CD4-positive, alpha-beta T cell (primary cell): ENCODE measurements at regions of chr3 and their contacts with region 1.

Region 1: GRCh38 chr3:170180908-170181879 is at the start of gene PHC3:
- DNase-seq: peak; percentile 85 to 96 (median 90)
- ATAC-seq: peak; percentile 64
- H3K4me3 ChIP-seq: peak within 1 kb of the TSS; percentile 96
- H3K4me3 Mint-ChIP-seq: peak within 1 kb of the TSS; percentile 100
- H3K27ac ChIP-seq: peak within 1 kb of the TSS; percentile 97 to 99
- H3K27ac Mint-ChIP-seq: peak within 1 kb of the TSS; percentile 100
- H3K4me1 ChIP-seq: peaks cover 36% of the 10 kb centered on the region
- H3K4me1 Mint-ChIP-seq: peaks cover 40% of the 10 kb centered on the region
- H3K27me3 ChIP-seq: no peaks in the 10 kb centered on the region
- H3K27me3 Mint-ChIP-seq: no peaks in the 10 kb centered on the region
- CTCF ChIP-seq: no peak
- total RNA-seq, gene PHC3: 143 to 150 TPM

Region 2: DNA sequence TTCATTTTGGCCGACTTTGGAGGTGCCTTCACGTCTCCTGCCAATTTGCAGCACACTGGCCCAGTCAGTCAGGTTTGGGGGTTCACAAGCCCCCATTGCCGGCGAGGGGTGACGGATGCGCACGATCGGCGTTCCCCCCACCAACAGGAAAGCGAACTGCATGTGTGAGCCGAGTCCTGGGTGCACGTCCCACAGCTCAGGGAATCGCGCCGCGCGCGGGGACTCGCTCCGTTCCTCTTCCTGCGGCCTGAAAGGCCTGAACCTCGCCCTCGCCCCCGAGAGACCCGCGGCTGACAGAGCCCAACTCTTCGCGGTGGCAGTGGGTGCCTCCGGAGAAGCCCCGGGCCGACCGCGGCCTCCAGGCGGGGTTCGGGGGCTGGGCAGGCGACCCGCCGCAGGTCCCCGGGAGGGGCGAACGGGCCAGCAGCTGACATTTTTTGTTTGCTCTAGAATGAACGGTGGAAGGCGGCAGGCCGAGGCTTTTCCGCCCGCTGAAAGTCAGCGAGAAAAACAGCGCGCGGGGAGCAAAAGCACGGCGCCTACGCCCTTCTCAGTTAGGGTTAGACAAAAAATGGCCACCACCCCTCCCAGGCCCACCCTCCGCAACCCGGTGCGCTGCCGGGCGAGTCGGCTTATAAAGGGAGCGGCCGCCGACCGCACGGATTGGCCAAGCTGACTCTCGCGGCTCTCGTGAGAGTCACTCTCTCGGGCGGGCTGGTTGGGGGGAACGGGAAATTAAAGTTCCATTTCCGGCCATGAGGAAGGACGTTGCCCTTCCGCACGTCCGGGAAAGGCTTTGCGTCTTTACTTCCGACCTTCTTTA is 416.5 kb before region 1 on chr3 and contains the start of gene TERC:
- CTCF ChIA-PET with region 1: no interaction called
- POLR2A ChIA-PET with region 1: interaction called, 16 read pairs
- intact Hi-C with region 1: loop called in 1 of 2 experiments (anchors 5 kb)
- DNase-seq: peak; percentile 82 to 98 (median 92)
- ATAC-seq: peak; percentile 82
- H3K4me3 ChIP-seq: peak within 1 kb of the TSS; percentile 93
- H3K4me3 Mint-ChIP-seq: peak within 1 kb of the TSS; percentile 98
- H3K27ac ChIP-seq: peak within 1 kb of the TSS; percentile 95 to 96
- H3K27ac Mint-ChIP-seq: peak within 1 kb of the TSS; percentile 97
- H3K4me1 ChIP-seq: peaks cover 27% of the 10 kb centered on the region
- H3K4me1 Mint-ChIP-seq: peaks cover 38% of the 10 kb centered on the region
- H3K27me3 ChIP-seq: no peaks in the 10 kb centered on the region
- H3K27me3 Mint-ChIP-seq: no peaks in the 10 kb centered on the region
- CTCF ChIP-seq: no peak
- total RNA-seq, gene TERC: 9.0 to 10.4 TPM

Region 3: DNA sequence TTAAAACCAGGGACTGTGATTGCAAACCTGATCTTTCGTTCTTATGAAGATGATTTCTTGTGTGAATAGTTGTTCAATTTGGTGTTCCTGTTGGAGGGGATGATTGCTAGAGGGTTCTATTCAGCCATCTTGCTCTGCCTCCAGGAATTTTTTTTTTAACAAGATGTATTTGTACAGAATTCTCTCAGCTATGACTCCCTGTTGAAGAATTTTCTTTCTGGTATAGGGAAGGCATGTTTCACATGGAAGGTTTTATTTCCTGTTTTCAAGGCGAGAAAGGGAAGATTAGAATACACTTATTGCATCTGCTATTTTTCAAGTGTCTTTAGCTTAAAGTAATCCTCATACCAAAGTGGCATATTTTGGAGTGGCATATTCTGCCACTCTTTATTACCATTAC is 362.9 kb before region 1 on chr3:
- CTCF ChIA-PET with region 1: no interaction called
- POLR2A ChIA-PET with region 1: no interaction called
- intact Hi-C with region 1: no loop called
- DNase-seq: no peak
- ATAC-seq: no peak
- H3K4me3 ChIP-seq: no peak overlapping the region
- H3K4me3 Mint-ChIP-seq: no peak overlapping the region
- H3K27ac ChIP-seq: no peak overlapping the region
- H3K27ac Mint-ChIP-seq: no peak overlapping the region
- H3K4me1 ChIP-seq: peaks cover 11% of the 10 kb centered on the region
- H3K4me1 Mint-ChIP-seq: peaks cover 12% of the 10 kb centered on the region
- H3K27me3 ChIP-seq: peaks cover 4% of the 10 kb centered on the region in 2 experiments
- H3K27me3 Mint-ChIP-seq: peaks cover 31% of the 10 kb centered on the region
- CTCF ChIP-seq: no peak

Region 4: DNA sequence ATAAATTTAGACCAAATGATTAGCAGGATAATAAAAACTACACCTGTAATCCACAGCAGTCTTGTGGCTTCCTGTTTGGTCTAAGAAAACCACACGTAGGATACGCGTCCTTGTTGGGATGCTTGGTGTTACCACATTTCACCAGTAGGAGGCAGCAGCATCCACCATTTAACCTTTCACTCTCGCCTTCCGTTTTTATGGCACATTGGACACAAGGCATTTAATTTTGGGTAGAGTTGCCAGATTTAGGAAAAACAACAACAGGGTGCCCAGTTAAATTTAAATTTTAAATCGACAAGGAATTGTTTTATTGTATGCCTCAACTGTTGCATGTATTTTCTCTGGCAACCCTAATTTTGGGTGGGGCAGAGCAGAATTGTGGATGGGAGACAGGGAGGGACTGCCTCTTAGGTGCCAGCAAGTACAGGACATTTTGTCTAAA is 317.7 kb before region 1 on chr3:
- CTCF ChIA-PET with region 1: no interaction called
- POLR2A ChIA-PET with region 1: no interaction called
- intact Hi-C with region 1: loop called in 1 of 2 experiments (anchors 10 kb)
- DNase-seq: peak; percentile 43 to 87 (median 52)
- ATAC-seq: peak; percentile 81
- H3K4me3 ChIP-seq: no peak overlapping the region
- H3K4me3 Mint-ChIP-seq: no peak overlapping the region
- H3K27ac ChIP-seq: no peak overlapping the region
- H3K27ac Mint-ChIP-seq: no peak overlapping the region
- H3K4me1 ChIP-seq: peaks cover 19% of the 10 kb centered on the region
- H3K4me1 Mint-ChIP-seq: peaks cover 29% of the 10 kb centered on the region
- H3K27me3 ChIP-seq: no peaks in the 10 kb centered on the region
- H3K27me3 Mint-ChIP-seq: peaks cover 5% of the 10 kb centered on the region
- CTCF ChIP-seq: peak; percentile 98

Region 5: GRCh38 chr3:170154569-170155143 is 26.5 kb before region 1 on chr3:
- CTCF ChIA-PET with region 1: interaction called, 3 read pairs
- POLR2A ChIA-PET with region 1: interaction called, 30 read pairs
- intact Hi-C with region 1: loop called in 1 of 2 experiments (anchors 2 kb)
- DNase-seq: peak in 3 of 14 experiments; percentile 28 to 44 (median 33)
- ATAC-seq: peak; percentile 89
- H3K4me3 ChIP-seq: no peak overlapping the region
- H3K4me3 Mint-ChIP-seq: peak overlapping the region; percentile 85
- H3K27ac ChIP-seq: peak overlapping the region; percentile 3 to 60
- H3K27ac Mint-ChIP-seq: peak overlapping the region; percentile 92
- H3K4me1 ChIP-seq: peaks cover 35% of the 10 kb centered on the region
- H3K4me1 Mint-ChIP-seq: peaks cover 66% of the 10 kb centered on the region
- H3K27me3 ChIP-seq: no peaks in the 10 kb centered on the region
- H3K27me3 Mint-ChIP-seq: no peaks in the 10 kb centered on the region
- CTCF ChIP-seq: no peak

Region 6: GRCh38 chr3:170869645-170870593 is 688.7 kb after region 1 on chr3 and contains the start of gene RPL22L1:
- CTCF ChIA-PET with region 1: no interaction called
- POLR2A ChIA-PET with region 1: interaction called, 3 read pairs
- intact Hi-C with region 1: loop called (anchors 2 to 10 kb)
- DNase-seq: peak; percentile 86 to 97 (median 89)
- ATAC-seq: peak; percentile 93
- H3K4me3 ChIP-seq: peak within 1 kb of the TSS; percentile 84
- H3K4me3 Mint-ChIP-seq: peak within 1 kb of the TSS; percentile 93
- H3K27ac ChIP-seq: peak within 1 kb of the TSS; percentile 68 to 94
- H3K27ac Mint-ChIP-seq: peak within 1 kb of the TSS; percentile 93
- H3K4me1 ChIP-seq: peaks cover 25% of the 10 kb centered on the region
- H3K4me1 Mint-ChIP-seq: peaks cover 32% of the 10 kb centered on the region
- H3K27me3 ChIP-seq: no peaks in the 10 kb centered on the region
- H3K27me3 Mint-ChIP-seq: no peaks in the 10 kb centered on the region
- CTCF ChIP-seq: peak; percentile 12
- total RNA-seq, gene RPL22L1: 53.5 to 55.6 TPM